ENCODE measurements at regions of chr1 and their contacts with region 1.

Region 1: DNA sequence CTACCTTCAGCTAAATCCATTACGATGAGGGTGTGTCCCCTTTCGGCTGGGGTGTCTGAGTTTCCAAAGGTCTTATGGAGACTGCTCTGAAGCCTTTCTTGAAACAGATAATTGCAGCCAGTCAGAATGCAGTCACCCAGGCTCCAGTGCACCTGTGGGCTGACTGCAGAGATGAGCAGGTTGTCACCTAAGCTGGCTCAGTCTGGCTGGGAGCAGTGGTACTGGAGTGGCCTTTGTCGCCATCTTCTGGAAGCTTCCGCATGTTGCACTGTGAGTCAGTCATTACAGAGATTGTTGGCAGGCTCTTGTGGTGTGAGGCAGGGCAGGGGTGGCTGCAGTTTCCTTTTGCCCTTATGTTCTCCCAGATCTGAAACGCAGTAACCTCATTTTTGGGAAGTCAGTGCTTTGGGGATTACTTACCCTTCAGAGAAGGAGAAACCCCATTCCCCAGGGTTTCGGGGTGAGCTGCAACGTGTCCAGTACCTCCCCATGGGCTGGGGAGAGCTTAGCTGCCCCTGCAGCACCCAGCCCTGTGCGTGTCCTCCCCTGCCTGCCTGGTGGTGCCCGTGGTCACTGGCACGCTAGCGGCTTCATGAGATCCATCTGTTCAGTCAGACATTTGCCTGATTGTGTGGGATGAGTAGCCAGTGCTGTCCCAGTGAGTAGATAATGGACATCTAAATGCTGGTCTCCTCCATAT is 48.0 kb downstream of the SMYD2 start:
- DNase-seq: peak; percentile 73 to 90 (median 86)
- H3K4me3 ChIP-seq: no peak overlapping the region
- H3K27ac ChIP-seq: no peak overlapping the region
- H3K27me3 ChIP-seq: no peaks in the 10 kb centered on the region
- CTCF ChIP-seq: peak; percentile 67 to 98 (median 93)

Region 2: GRCh38 chr1:213135572-213135971 is 1193.3 kb before region 1 on chr1:
- intact Hi-C with region 1: loop called in 1 of 2 experiments (anchors 10 kb)
- DNase-seq: no peak
- H3K4me3 ChIP-seq: no peak overlapping the region
- H3K27ac ChIP-seq: no peak overlapping the region
- H3K27me3 ChIP-seq: no peaks in the 10 kb centered on the region
- CTCF ChIP-seq: peak in 3 of 56 donors; percentile 14 to 37 (median 17)

Region 3: GRCh38 chr1:214213136-214213535 is 115.8 kb before region 1 on chr1:
- intact Hi-C with region 1: loop called (anchors 1 to 2 kb)
- DNase-seq: no peak
- H3K4me3 ChIP-seq: no peak overlapping the region
- H3K27ac ChIP-seq: no peak overlapping the region
- H3K27me3 ChIP-seq: peaks cover 0 to 4% (median 0%) of the 10 kb centered on the region in 45 donors
- CTCF ChIP-seq: no peak

Region 4: GRCh38 chr1:214277704-214278635 is 51.0 kb before region 1 on chr1:
- intact Hi-C with region 1: loop called in 1 of 2 experiments (anchors 5 kb)
- DNase-seq: no peak
- H3K4me3 ChIP-seq: no peak overlapping the region
- H3K27ac ChIP-seq: peak overlapping the region in 2 of 59 donors; percentile 16 to 19
- H3K27me3 ChIP-seq: no peaks in the 10 kb centered on the region
- CTCF ChIP-seq: no peak

Region 5: GRCh38 chr1:214573386-214574358 is 244.8 kb after region 1 on chr1:
- intact Hi-C with region 1: no loop called
- DNase-seq: no peak
- H3K4me3 ChIP-seq: no peak overlapping the region
- H3K27ac ChIP-seq: no peak overlapping the region
- H3K27me3 ChIP-seq: no peaks in the 10 kb centered on the region
- CTCF ChIP-seq: no peak

Region 6: GRCh38 chr1:214623430-214623829 is 294.5 kb after region 1 on chr1:
- intact Hi-C with region 1: loop called (anchors 5 to 10 kb)
- DNase-seq: no peak
- H3K4me3 ChIP-seq: no peak overlapping the region
- H3K27ac ChIP-seq: no peak overlapping the region
- H3K27me3 ChIP-seq: no peaks in the 10 kb centered on the region
- CTCF ChIP-seq: no peak

Region 7: DNA sequence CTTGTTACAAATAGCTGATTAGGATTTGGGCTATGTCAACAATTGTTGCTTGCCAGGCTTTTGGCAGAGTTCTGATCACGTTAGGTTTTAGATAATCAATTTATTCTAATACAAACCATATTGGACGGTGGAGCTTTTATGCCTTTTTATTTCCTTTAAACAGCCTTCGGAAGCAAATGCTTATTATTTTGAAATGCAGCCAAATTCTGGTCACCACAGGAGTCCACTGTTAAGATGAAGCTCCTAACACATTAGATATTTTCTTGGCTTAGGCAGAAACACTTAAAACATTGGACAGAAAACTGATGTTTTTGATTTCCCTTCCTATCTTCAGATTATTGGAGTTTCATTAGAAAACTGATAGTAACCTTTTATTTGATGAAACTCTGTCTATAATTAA is 357.0 kb after region 1 on chr1:
- intact Hi-C with region 1: no loop called
- DNase-seq: no peak
- H3K4me3 ChIP-seq: no peak overlapping the region
- H3K27ac ChIP-seq: no peak overlapping the region
- H3K27me3 ChIP-seq: peaks cover 0 to 9% (median 0%) of the 10 kb centered on the region in 45 donors
- CTCF ChIP-seq: no peak

Region 8: DNA sequence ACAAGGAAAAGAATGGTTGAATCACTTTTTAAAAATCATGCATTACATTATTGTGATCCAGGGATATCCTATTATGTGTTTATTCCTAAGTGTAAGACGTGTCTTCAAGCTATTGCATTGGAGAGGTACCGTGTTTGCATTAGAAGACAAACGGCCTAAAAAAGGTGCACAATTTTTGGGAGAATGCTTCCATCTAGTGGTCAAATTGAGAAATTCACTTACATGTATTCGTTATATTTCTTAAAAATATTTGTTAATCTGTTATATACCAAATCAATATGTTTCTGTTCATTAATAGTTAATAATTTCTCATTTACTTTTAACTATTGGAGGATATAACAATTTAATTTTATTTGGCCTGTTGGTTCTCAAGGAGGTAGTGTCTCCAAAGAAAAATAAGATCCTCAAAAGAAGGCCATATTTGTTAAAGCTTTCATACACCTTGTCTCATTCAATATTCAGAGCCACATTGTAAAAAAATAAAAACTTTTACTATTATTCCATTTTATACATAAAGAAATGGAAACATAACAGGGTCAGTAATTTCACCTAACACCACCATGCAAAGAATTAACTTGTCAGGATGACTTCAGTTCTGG is 1197.7 kb after region 1 on chr1:
- intact Hi-C with region 1: loop called in 1 of 2 experiments (anchors 5 kb)
- DNase-seq: no peak
- H3K4me3 ChIP-seq: peak overlapping the region in 1 of 59 donors; percentile 6
- H3K27ac ChIP-seq: no peak overlapping the region
- H3K27me3 ChIP-seq: peaks cover 0 to 13% (median 0%) of the 10 kb centered on the region in 45 donors
- CTCF ChIP-seq: peak; percentile 71 to 97 (median 86)

Measured in dorsolateral prefrontal cortex (tissue), 120 donors.